ENCODE measurements at regions of chr5 and their contacts with region 1.

Region 1: DNA sequence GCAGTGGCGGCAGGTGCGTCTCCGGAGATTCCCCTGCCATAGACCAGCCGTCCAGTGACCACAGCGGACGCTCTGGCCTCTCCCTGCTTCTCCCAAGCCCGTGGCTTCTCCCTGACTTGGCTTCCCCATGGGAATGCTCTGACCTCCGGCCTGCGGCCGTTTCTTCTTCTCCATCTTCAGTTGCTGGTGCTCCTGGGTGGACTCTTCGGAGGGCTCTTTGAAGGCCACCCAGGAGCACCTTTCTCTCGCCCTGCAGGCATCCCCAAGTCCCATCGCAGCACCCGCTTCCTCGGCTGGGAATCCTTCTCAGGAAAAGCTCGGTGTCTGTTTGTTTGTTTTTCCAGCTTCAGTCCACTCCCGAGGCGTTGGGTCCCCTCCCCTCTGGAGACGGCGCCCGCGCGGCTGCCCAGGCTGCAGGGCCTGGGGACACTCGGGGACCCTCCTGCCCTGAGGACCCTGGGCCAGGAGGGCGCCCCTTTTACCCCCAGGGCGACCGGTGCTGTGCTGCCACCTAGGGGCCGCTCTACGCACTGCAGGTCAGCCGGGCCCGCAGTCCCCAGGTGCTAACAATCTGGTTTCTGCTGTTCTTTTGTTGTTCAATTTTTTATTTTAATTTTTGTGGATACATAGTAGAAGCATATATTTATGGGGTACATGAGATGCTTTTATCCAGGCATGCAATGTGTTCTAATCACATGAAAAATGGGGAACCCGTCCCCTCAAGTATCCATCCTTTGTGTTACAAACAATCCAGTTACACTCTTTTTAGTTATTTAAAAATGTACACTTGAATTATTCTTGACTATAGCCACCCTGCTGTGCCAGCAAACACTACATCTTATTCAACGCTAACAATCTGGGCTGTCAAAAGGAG is 197.9 kb upstream of the ADAMTS16 start:
- DNase-seq: peak in 1 of 9 donors; percentile 38
- ATAC-seq: peak; percentile 38
- H3K4me3 ChIP-seq: no peak overlapping the region
- H3K4me3 Mint-ChIP-seq: no peak overlapping the region
- H3K27ac ChIP-seq: no peak overlapping the region
- H3K27ac Mint-ChIP-seq: no peak overlapping the region
- H3K4me1 ChIP-seq: no peaks in the 10 kb centered on the region
- H3K4me1 Mint-ChIP-seq: no peaks in the 10 kb centered on the region
- H3K27me3 ChIP-seq: no peaks in the 10 kb centered on the region
- H3K27me3 Mint-ChIP-seq: peaks cover 0 to 12% (median 0%) of the 10 kb centered on the region in 5 donors

Region 2: DNA sequence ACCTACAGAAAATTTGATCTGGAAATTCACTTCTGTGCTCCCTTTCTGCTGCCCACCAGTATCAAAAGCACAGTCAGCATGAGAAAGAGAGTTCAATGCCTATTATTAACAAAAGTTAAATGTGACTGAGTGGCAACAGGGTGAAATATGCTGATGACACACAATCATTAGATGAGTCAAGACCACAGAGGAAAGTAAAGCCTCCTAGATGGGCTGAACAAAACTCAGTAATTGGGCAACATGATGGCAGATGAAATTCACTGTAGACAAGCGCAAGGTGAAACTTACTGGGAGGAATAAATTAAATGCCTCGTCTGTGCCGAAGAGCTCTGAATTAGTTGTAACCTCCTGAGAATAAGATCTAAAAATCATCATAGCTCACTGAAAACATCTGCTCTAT is 593.8 kb before region 1 on chr5:
- CTCF ChIA-PET with region 1: no interaction called
- POLR2A ChIA-PET with region 1: no interaction called
- intact Hi-C with region 1: no loop called
- DNase-seq: no peak
- ATAC-seq: no peak
- H3K4me3 ChIP-seq: no peak overlapping the region
- H3K4me3 Mint-ChIP-seq: no peak overlapping the region
- H3K27ac ChIP-seq: no peak overlapping the region
- H3K27ac Mint-ChIP-seq: no peak overlapping the region
- H3K4me1 ChIP-seq: no peaks in the 10 kb centered on the region
- H3K4me1 Mint-ChIP-seq: no peaks in the 10 kb centered on the region
- H3K27me3 ChIP-seq: no peaks in the 10 kb centered on the region
- H3K27me3 Mint-ChIP-seq: peaks cover 0 to 3% (median 0%) of the 10 kb centered on the region in 5 donors

Region 3: DNA sequence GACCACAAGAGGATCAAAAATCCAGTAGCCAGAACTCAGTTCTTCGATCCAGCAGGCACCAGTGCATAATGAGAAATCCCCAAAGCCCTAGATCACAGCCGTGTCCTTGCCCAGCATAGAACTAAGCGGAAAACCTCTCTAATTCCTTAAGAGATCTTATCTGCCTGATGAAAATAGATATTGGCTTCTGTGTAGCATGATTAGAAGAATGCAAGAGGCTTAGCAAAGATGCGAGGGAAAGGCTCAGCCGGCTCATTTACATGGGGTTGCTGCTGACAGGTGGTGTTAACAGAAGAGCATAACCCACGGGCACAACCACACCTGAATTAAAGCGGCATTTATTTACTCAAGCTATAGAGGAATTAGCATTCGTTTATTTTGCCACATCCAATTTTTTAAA is 202.0 kb before region 1 on chr5:
- CTCF ChIA-PET with region 1: no interaction called
- POLR2A ChIA-PET with region 1: no interaction called
- intact Hi-C with region 1: no loop called
- DNase-seq: no peak
- ATAC-seq: no peak
- H3K4me3 ChIP-seq: no peak overlapping the region
- H3K4me3 Mint-ChIP-seq: no peak overlapping the region
- H3K27ac ChIP-seq: no peak overlapping the region
- H3K27ac Mint-ChIP-seq: no peak overlapping the region
- H3K4me1 ChIP-seq: no peaks in the 10 kb centered on the region
- H3K4me1 Mint-ChIP-seq: no peaks in the 10 kb centered on the region
- H3K27me3 ChIP-seq: no peaks in the 10 kb centered on the region
- H3K27me3 Mint-ChIP-seq: no peaks in the 10 kb centered on the region

Region 4: DNA sequence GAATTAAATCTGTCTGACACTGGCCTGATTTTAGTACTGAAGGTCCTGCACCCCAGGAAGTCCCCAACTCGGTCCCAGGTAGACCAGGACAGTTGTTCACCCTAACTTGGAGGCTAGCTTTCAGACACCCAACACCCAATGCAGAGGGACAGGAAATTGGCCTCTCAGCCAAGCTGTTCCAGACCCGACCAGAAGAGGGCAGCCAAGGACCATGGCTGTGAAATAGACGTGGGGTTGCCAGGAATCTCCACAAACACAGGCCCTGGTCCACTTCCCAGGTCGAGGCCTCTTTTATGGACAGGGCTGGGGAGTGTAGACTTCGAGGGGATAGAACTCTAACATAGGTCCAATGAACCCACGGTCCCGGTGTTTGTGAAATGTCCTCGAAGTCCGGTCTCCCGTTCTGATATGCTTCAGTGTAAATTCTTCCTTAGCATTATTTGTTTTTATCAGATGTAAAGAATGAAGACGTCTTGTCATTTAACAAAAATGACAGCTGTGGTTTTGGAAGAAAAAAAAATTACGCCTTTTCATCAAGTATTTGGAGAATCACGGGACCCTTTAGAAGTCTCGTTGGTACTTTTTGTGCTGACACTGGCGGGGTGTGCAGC is 62.4 kb before region 1 on chr5:
- CTCF ChIA-PET with region 1: no interaction called
- POLR2A ChIA-PET with region 1: no interaction called
- intact Hi-C with region 1: loop called in 1 of 2 experiments (anchors 1 kb)
- DNase-seq: peak in 2 of 9 donors; percentile 14 to 55
- ATAC-seq: peak; percentile 40
- H3K4me3 ChIP-seq: no peak overlapping the region
- H3K4me3 Mint-ChIP-seq: no peak overlapping the region
- H3K27ac ChIP-seq: no peak overlapping the region
- H3K27ac Mint-ChIP-seq: no peak overlapping the region
- H3K4me1 ChIP-seq: no peaks in the 10 kb centered on the region
- H3K4me1 Mint-ChIP-seq: no peaks in the 10 kb centered on the region
- H3K27me3 ChIP-seq: no peaks in the 10 kb centered on the region
- H3K27me3 Mint-ChIP-seq: peaks cover 0 to 3% (median 0%) of the 10 kb centered on the region in 5 donors